ENCODE measurements at regions of chr21 and their contacts with region 1.

Region 1: GRCh38 chr21:32329331-32329730 is 30.7 kb downstream of the MRAP start:
- DNase-seq: no peak
- ATAC-seq: peak; percentile 14 to 45 (median 33)
- H3K4me3 ChIP-seq: no peak overlapping the region
- H3K27ac ChIP-seq: peak overlapping the region in 11 of 12 donors; percentile 65 to 82 (median 77)
- H3K4me1 ChIP-seq: peaks cover 3 to 49% (median 24%) of the 10 kb centered on the region in 12 donors
- H3K27me3 ChIP-seq: no peaks in the 10 kb centered on the region
- CTCF ChIP-seq: no peak
- POLR2A ChIP-seq: no peak

Region 2: GRCh38 chr21:32083197-32083596 is 246.1 kb before region 1 on chr21:
- intact Hi-C with region 1: no loop called
- DNase-seq: no peak
- ATAC-seq: no peak
- H3K4me3 ChIP-seq: no peak overlapping the region
- H3K27ac ChIP-seq: no peak overlapping the region
- H3K4me1 ChIP-seq: no peaks in the 10 kb centered on the region
- H3K27me3 ChIP-seq: no peaks in the 10 kb centered on the region
- CTCF ChIP-seq: no peak
- POLR2A ChIP-seq: no peak

Region 3: GRCh38 chr21:32173121-32173724 is 156.1 kb before region 1 on chr21:
- intact Hi-C with region 1: no loop called
- DNase-seq: no peak
- ATAC-seq: no peak
- H3K4me3 ChIP-seq: no peak overlapping the region
- H3K27ac ChIP-seq: no peak overlapping the region
- H3K4me1 ChIP-seq: no peaks in the 10 kb centered on the region
- H3K27me3 ChIP-seq: peaks cover 0 to 4% (median 0%) of the 10 kb centered on the region in 9 donors
- CTCF ChIP-seq: no peak
- POLR2A ChIP-seq: no peak

Region 4: GRCh38 chr21:32278518-32279376 is 50.6 kb before region 1 on chr21 and contains the start of gene MIS18A:
- intact Hi-C with region 1: loop called in 1 of 10 experiments (anchors 5 kb)
- DNase-seq: peak; percentile 95 to 98 (median 95)
- ATAC-seq: peak; percentile 95 to 98 (median 98)
- H3K4me3 ChIP-seq: peak within 1 kb of the TSS; percentile 70 to 99 (median 79)
- H3K27ac ChIP-seq: peak within 1 kb of the TSS in 10 of 12 donors; percentile 31 to 78 (median 62)
- H3K4me1 ChIP-seq: peaks cover 7 to 22% (median 17%) of the 10 kb centered on the region in 12 donors
- H3K27me3 ChIP-seq: no peaks in the 10 kb centered on the region
- CTCF ChIP-seq: peak in 4 of 12 donors; percentile 10 to 45 (median 21)
- POLR2A ChIP-seq: peak in 1 of 2 donors; percentile 51
- total RNA-seq, gene MIS18A: 1.4 to 4.1 (median 2.9) TPM

Region 5: DNA sequence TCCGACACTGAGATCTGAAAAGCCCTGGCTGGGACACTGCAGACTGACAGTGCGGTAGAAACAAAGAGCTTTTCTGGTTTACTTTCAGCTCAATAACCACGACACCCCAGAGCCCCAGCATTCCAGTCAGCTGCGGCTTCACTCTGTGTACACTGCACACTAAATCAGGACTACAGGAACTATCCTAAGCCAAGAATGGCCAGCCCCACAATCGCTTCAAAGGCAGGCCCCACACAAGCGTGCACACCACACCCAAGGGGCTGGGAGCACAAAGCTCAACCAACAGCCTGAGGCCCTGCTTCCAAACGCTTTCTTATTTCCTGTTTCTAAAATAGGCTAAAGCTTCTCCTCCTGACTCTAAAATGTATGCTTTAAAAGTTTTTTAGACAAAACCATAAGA is 35.1 kb after region 1 on chr21:
- intact Hi-C with region 1: loop called in 1 of 10 experiments (anchors 1 kb)
- DNase-seq: peak in 4 of 5 donors; percentile 49 to 69 (median 61)
- ATAC-seq: peak; percentile 60 to 88 (median 74)
- H3K4me3 ChIP-seq: no peak overlapping the region
- H3K27ac ChIP-seq: peak overlapping the region; percentile 18 to 85 (median 73)
- H3K4me1 ChIP-seq: peaks cover 0 to 27% (median 15%) of the 10 kb centered on the region in 12 donors
- H3K27me3 ChIP-seq: no peaks in the 10 kb centered on the region
- CTCF ChIP-seq: no peak
- POLR2A ChIP-seq: no peak

Region 6: GRCh38 chr21:32378956-32379355 is 49.6 kb after region 1 on chr21:
- intact Hi-C with region 1: loop called in 1 of 10 experiments (anchors 5 kb)
- DNase-seq: peak in 4 of 5 donors; percentile 50 to 62 (median 58)
- ATAC-seq: peak; percentile 87 to 94 (median 91)
- H3K4me3 ChIP-seq: no peak overlapping the region
- H3K27ac ChIP-seq: peak overlapping the region in 7 of 12 donors; percentile 41 to 73 (median 68)
- H3K4me1 ChIP-seq: peaks cover 0 to 11% (median 0%) of the 10 kb centered on the region in 12 donors
- H3K27me3 ChIP-seq: no peaks in the 10 kb centered on the region
- CTCF ChIP-seq: no peak
- POLR2A ChIP-seq: no peak

Measured in heart left ventricle (tissue), 16 donors.